ENCODE measurements at regions of chrX and their contacts with region 1.

Region 1: DNA sequence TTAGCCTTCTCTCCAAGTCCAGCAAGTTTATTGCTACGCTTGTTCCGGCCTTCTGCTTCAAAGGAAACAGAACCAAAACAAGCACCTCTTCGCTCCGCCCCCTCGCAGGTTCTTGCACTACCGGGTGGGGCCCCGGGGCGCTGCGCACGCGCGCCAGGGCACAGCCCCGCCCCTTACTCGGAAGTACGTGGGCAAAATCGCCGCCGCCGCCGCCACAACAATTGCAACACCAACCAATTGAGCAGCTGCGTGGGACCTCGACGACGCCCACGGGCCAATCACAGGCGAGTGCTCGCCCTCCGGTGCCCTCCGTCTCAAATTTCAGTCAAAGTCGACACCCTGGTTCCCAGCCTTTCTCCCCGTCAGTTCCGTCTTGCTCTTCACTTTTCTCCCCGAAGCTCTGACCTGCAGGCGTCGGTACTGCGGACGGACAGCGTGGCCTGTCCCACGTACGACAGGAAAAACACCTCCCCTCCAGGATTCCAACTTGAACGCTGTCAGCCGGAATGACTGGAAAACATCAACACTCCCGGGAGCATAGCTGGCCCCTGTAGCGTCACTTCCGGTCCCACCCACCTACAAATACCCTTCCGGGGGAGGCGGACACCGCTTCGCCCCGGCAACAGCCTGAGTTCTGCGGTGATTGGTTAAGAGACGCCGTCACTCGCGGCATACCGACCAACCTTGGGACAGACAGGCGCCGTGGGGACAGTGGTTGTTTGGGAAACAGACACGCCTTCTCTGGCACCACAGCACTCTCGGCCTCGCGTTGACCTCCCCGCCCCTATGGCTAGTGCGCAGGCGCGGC is 624 bp upstream of the OTUD5 start:
- DNase-seq: peak; percentile 94
- H3K4me3 Mint-ChIP-seq: peak overlapping the region; percentile 98
- H3K27ac Mint-ChIP-seq: peak overlapping the region; percentile 100
- H3K4me1 Mint-ChIP-seq: peaks cover 49% of the 10 kb centered on the region
- H3K27me3 Mint-ChIP-seq: no peaks in the 10 kb centered on the region

Region 2: DNA sequence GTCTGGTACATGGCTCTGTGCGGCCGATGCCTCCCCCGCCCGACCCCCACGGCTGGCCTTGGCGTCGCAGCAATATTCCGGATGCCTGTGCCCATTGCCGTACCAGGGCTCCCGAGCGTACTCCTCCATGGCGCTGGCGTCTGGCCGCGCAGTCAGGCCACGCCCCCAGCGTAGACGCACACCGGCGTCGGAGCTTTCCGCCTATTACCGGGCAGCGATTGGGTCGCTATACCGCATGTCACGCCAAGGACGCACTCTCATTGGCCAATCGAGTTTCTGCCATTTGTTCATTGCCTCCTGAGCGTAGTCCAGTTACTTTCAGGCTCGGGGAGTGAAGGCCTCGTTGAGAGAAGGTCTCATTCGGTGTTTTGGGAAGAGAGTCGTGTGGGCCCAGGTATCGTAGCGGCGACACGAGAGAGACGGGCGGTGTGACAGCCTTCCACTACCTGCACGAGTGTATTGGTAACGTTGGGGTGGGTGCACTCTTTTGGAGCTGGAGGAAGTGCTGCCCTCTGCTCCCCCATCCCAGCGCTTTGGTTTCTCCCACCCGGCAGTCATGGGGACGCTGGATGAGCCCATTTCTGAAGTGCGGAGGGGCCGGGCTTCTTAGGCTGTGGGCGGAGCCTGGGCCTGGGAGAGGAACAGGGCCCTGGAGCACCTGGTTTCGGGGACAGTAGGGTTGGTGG is 60.3 kb before region 1 on chrX and contains the starts of genes PQBP1 and TIMM17B:
- CTCF ChIA-PET with region 1: no interaction called
- POLR2A ChIA-PET with region 1: interaction called, 14 read pairs
- DNase-seq: peak; percentile 90
- H3K4me3 Mint-ChIP-seq: peak within 1 kb of the TSS; percentile 83
- H3K27ac Mint-ChIP-seq: peak within 1 kb of the TSS; percentile 98
- H3K4me1 Mint-ChIP-seq: peaks cover 35% of the 10 kb centered on the region
- H3K27me3 Mint-ChIP-seq: no peaks in the 10 kb centered on the region
- total RNA-seq, gene PQBP1: 78.5 to 79.6 TPM
- total RNA-seq, gene TIMM17B: 55.2 to 60.6 TPM

Region 3: DNA sequence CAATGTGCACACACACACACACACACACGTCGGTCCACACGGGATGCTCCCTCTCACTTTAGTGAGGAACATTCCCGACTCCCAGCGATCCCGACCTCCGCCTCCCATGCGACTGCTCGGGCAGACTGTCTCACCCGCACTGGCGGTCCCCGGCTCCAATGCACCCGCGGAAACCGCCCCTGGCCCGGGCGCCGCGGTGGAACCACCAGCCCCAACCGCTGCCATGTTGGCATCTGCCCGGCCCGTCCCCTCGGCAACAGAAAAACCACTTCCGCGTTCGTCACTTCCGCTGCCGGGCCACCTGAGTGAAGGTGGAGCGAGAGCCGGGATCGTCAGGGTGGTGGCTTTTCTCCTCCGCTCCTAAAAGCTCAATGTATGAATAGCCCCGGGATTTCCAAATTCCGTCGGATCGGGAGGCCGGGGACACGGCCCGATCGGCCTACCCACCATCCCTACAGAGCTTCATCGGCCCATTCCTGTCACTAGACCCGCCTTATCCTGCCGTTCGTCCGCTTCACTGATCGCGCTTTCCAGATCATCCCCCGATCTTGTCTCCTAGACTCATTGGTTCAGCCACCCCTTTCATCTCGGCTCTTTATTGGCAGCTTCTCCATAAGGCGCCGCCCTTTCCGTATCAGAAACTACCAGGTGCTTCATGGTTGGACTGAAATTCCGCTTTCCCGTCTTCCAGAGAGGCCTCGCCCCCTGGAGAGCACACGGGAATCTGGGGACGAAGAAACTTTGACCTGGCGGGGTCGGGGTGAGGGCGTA is 46.4 kb before region 1 on chrX and contains the start of gene SLC35A2:
- CTCF ChIA-PET with region 1: no interaction called
- POLR2A ChIA-PET with region 1: interaction called, 13 read pairs
- DNase-seq: peak; percentile 90
- H3K4me3 Mint-ChIP-seq: peak within 1 kb of the TSS; percentile 95
- H3K27ac Mint-ChIP-seq: peak within 1 kb of the TSS; percentile 92
- H3K4me1 Mint-ChIP-seq: peaks cover 48% of the 10 kb centered on the region
- H3K27me3 Mint-ChIP-seq: no peaks in the 10 kb centered on the region
- total RNA-seq, gene SLC35A2: 17.9 to 18.3 TPM

Region 4: DNA sequence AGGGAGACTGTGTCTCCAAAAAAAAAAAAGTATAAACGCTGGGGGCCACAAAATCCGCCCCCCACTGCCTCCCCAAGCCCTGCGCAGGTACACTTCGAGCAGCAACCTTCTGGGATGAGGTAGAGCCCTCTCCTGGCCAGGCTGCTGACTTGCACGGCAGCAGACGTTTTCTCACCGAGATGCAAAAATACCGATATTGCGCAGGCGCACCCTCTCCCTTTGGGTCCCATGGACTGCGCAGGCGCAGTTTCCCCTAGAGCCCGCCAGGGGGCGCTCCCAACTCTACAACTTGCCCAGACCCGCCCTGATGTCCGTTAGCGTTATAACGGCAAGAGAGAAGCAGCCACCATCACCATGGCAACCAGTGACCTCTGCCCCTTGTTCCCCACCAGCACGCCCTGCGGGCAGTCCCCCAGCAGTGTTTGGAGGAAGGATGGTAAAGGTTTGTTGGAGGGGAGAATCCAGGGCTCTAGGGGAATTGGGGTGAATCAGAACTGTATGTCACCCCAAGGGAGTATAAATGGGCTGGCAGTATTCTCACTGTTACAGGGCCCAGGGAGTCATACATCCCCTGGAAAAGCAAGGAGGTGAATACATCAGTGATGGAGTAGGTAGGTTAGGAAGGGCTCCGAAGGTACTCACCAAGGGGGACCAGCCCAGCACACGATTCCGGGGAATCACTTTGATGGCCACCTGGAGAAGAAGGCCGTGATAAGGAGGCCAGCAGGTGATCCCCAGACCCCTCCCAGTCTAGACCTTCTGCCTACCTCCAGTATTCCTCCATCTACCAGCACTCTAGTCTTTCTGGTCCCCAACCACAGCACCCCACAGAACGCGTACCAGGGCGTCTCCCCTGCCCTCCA is 40.7 kb before region 1 on chrX:
- CTCF ChIA-PET with region 1: no interaction called
- POLR2A ChIA-PET with region 1: interaction called, 18 read pairs
- DNase-seq: peak; percentile 92
- H3K4me3 Mint-ChIP-seq: peak overlapping the region; percentile 95
- H3K27ac Mint-ChIP-seq: peak overlapping the region; percentile 98
- H3K4me1 Mint-ChIP-seq: peaks cover 55% of the 10 kb centered on the region
- H3K27me3 Mint-ChIP-seq: no peaks in the 10 kb centered on the region

Region 5: GRCh38 chrX:48945516-48946348 is 12.3 kb before region 1 on chrX:
- CTCF ChIA-PET with region 1: interaction called, 9 read pairs
- POLR2A ChIA-PET with region 1: interaction called, 125 read pairs
- DNase-seq: peak; percentile 59
- H3K4me3 Mint-ChIP-seq: no peak overlapping the region
- H3K27ac Mint-ChIP-seq: peak overlapping the region; percentile 68
- H3K4me1 Mint-ChIP-seq: peaks cover 57% of the 10 kb centered on the region
- H3K27me3 Mint-ChIP-seq: no peaks in the 10 kb centered on the region

Region 6: DNA sequence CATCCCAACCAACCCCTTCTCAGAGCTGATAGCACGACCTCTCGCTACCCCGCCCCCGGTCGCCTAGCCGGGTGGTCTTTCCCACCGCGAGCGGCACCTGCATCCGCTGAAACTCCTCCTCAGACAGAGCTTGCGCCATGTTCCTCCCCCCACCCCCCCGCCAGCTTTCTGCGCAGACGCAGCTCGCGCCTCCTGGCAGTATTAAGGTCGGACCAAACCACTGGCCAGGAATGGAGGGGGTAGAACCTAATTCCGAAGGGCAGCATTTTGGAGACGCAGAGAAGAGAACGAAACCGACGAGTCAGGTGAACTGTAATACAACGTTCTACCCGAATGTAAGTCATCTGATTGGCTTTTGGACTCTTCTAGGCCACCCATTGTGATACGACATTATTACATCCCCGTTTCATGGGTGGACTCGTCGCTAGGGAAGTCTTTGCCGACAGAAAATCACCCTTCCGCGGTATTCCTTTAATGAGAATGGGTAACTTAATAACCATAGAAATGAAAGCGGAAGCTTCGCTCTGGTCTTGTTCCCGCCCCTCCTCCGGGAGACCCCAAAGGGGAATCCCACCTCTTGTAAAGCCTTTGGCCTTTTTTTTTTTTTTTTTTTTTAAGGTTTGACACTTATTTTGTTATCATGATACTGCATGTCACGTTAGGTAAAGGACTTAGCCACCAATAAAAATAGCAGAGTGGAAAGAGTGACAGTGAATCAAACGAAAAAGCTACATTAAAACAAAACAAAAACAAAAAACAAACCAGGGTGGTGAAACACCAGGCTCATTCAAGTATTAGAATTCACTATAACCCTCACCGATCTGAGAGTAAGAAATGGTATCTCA is 44.3 kb after region 1 on chrX and contains the start of gene GRIPAP1:
- CTCF ChIA-PET with region 1: interaction called, 5 read pairs
- POLR2A ChIA-PET with region 1: interaction called, 18 read pairs
- DNase-seq: peak; percentile 82
- H3K4me3 Mint-ChIP-seq: peak within 1 kb of the TSS; percentile 98
- H3K27ac Mint-ChIP-seq: peak within 1 kb of the TSS; percentile 94
- H3K4me1 Mint-ChIP-seq: peaks cover 41% of the 10 kb centered on the region
- H3K27me3 Mint-ChIP-seq: no peaks in the 10 kb centered on the region
- total RNA-seq, gene GRIPAP1: 104 to 116 TPM

Region 7: DNA sequence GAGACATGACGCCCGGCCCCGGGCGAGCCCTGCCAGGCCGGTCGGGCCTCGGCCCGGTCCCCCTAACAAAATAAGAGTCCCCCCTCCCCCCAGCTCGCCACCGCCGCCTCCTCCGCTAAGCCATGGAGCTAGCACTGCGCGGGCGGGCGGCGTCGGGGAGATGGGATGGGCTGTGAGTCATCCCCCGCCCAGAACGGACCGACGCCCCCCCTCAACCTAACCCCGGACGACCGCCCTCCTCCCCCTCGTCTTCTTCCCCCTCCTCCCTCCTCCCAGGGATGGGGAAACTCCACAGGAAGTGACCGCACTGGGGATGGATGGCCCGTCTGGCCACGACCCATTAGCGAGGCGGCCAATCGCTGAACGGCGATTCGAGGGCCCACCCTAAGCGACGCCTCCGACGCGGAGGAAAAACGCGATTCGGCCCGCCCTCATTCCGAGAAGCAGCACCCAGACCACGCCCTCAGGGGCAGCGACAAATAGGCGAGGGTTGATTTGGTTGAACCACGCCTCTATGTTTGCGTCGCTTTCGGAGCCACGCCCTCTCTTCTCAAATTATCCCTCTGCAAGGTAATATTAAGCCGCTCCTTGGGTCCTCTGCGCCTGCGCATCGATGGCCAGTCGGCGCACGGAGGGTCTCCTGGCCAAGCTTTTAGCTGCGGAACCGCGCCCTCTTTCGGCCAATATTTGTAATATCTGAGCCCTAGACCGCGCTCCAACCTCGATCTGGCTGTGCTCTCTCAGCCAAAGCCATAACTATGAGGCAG is 85.4 kb after region 1 on chrX and contains the start of gene TFE3:
- CTCF ChIA-PET with region 1: interaction called, 9 read pairs
- POLR2A ChIA-PET with region 1: interaction called, 21 read pairs
- DNase-seq: peak; percentile 97
- H3K4me3 Mint-ChIP-seq: peak within 1 kb of the TSS; percentile 94
- H3K27ac Mint-ChIP-seq: peak within 1 kb of the TSS; percentile 93
- H3K4me1 Mint-ChIP-seq: peaks cover 41% of the 10 kb centered on the region
- H3K27me3 Mint-ChIP-seq: peaks cover 2% of the 10 kb centered on the region
- total RNA-seq, gene TFE3: 32.2 to 32.7 TPM

Region 8: DNA sequence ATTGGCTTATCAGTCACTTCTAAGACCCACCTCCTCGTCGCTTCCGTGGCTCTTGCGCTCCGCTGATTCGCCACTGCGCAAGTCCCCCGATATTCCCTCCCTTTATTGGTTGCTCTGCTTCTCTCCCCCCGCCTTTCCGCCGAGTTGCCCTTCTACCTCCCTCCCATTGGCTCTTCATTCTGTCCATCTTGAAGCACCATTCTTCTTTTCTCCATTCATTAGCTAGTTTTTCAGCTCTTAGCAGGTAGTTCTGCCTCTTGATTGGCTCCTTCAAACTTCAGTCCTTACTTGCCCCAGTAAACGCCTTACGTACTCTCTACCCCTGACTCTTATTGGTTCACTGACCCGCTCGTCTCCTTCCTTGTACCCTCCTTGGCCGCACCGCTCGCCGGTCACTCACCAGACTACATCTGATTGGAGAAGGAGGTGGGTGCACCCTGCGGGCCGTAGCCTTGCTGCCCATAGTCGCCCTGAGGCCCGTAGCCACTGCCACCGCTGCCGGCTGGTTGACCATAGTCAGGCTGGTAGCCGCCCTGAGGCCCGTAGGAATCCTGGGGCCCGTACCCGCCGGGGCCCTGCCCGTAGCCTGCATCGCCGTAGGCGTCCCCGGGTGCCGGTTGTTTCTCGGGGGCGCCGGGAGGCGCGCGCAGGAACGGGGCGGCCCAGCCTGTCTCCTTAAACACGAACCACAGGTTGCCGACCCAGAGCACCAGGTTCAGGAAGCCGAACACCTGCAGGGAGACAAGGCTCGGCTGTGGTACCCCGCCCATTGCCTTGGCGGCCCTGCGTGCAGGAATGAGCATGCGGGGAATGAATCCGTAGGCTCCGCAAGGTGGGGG is 233.2 kb after region 1 on chrX:
- CTCF ChIA-PET with region 1: no interaction called
- POLR2A ChIA-PET with region 1: no interaction called
- DNase-seq: peak; percentile 89
- H3K4me3 Mint-ChIP-seq: peak overlapping the region; percentile 94
- H3K27ac Mint-ChIP-seq: peak overlapping the region; percentile 87
- H3K4me1 Mint-ChIP-seq: peaks cover 45% of the 10 kb centered on the region
- H3K27me3 Mint-ChIP-seq: no peaks in the 10 kb centered on the region

Measured in activated CD4-positive, alpha-beta memory T cell treated with anti-CD3 and anti-CD28 coated beads, Interleukin-2, amount 10 ng/mL, durations not matched to agents 7 days and 5 days (primary cell).